ENCODE measurements at regions of chr2 and their contacts with region 1.

Region 1: GRCh38 chr2:54455563-54456361 is at the start of gene SPTBN1:
- DNase-seq: peak; percentile 90
- ATAC-seq: peak; percentile 85
- H3K4me3 ChIP-seq: peak within 1 kb of the TSS; percentile 88
- H3K27ac ChIP-seq: peak within 1 kb of the TSS; percentile 72
- H3K4me1 ChIP-seq: peaks cover 7% of the 10 kb centered on the region; the same call in 1 of the 2 replicates
- H3K27me3 ChIP-seq: no peaks in the 10 kb centered on the region
- CTCF ChIP-seq: no peak
- POLR2A ChIP-seq: peak; percentile 61; the same call in 1 of the 2 replicates
- RAD21 ChIP-seq: 0 out of 2 replicates have a peak, but pooled peaks have one; percentile 5
- total RNA-seq, gene SPTBN1: 230 and 241 TPM in 2 replicates

Region 2: GRCh38 chr2:53970724-53971602 is 484.8 kb before region 1 on chr2 and contains the start of gene PSME4:
- CTCF ChIA-PET with region 1: no interaction called
- POLR2A ChIA-PET with region 1: no interaction called
- dilution Hi-C with region 1: no loop called
- in situ Hi-C with region 1: no loop called
- intact Hi-C with region 1: no loop called
- DNase-seq: peak; percentile 84
- ATAC-seq: peak; percentile 90
- H3K4me3 ChIP-seq: peak within 1 kb of the TSS; percentile 100
- H3K27ac ChIP-seq: peak within 1 kb of the TSS; percentile 99
- H3K4me1 ChIP-seq: peaks cover 6% of the 10 kb centered on the region; the same call in 1 of the 2 replicates
- H3K27me3 ChIP-seq: no peaks in the 10 kb centered on the region
- CTCF ChIP-seq: no peak
- POLR2A ChIP-seq: peak; percentile 97
- RAD21 ChIP-seq: no peak
- total RNA-seq, gene PSME4: 58.9 and 61.3 TPM in 2 replicates

Region 3: GRCh38 chr2:54161660-54162424 is 293.9 kb before region 1 on chr2:
- CTCF ChIA-PET with region 1: no interaction called
- POLR2A ChIA-PET with region 1: no interaction called
- dilution Hi-C with region 1: no loop called
- in situ Hi-C with region 1: no loop called
- intact Hi-C with region 1: loop called (anchors 5 kb)
- DNase-seq: peak; percentile 15
- ATAC-seq: no peak
- H3K4me3 ChIP-seq: no peak overlapping the region
- H3K27ac ChIP-seq: no peak overlapping the region
- H3K4me1 ChIP-seq: no peaks in the 10 kb centered on the region
- H3K27me3 ChIP-seq: no peaks in the 10 kb centered on the region
- CTCF ChIP-seq: no peak; the same call in 1 of the 2 replicates
- POLR2A ChIP-seq: no peak
- RAD21 ChIP-seq: no peak

Region 4: GRCh38 chr2:54330162-54330925 is 125.4 kb before region 1 on chr2:
- CTCF ChIA-PET with region 1: no interaction called
- POLR2A ChIA-PET with region 1: no interaction called
- dilution Hi-C with region 1: no loop called
- in situ Hi-C with region 1: no loop called
- intact Hi-C with region 1: loop called (anchors 5 kb)
- DNase-seq: peak; percentile 92
- ATAC-seq: peak; percentile 99
- H3K4me3 ChIP-seq: peak overlapping the region; percentile 78
- H3K27ac ChIP-seq: peak overlapping the region; percentile 70
- H3K4me1 ChIP-seq: peaks cover 3% of the 10 kb centered on the region
- H3K27me3 ChIP-seq: no peaks in the 10 kb centered on the region
- CTCF ChIP-seq: no peak
- POLR2A ChIP-seq: peak; percentile 68
- RAD21 ChIP-seq: no peak

Region 5: DNA sequence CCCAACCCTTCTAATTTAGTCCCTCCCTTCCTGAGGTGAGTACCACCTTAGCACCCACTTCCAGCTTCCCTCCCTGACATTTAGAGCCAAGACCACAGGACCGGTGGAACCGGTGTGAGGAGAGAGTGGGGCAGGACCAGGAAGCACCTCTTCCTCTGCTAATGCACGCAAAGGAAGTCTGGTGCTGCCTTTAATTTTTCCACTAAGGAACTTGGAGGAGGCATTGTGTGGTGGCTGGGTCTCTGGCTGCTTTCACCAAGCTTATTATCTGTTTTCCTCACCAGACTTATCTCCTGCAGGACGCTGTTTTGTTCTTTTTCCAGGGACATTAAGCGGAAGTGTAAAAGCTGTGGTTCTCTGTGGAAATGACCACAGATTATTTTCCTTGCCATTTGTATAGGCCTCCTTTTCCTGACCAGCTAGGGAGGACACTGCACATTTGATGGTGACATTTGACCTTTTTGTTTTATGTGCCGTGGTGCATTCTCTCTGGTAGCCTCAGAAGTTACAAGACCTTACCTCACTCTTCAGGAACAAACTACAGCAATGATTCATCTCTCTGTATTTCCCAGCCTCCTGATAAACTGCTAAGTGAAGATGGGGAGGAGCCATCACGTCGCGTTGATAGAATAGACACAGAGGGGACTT is 39.5 kb before region 1 on chr2:
- CTCF ChIA-PET with region 1: no interaction called
- POLR2A ChIA-PET with region 1: no interaction called
- dilution Hi-C with region 1: no loop called
- in situ Hi-C with region 1: no loop called
- intact Hi-C with region 1: no loop called
- DNase-seq: peak; percentile 37
- ATAC-seq: no peak; the same call in 1 of the 2 replicates
- H3K4me3 ChIP-seq: no peak overlapping the region
- H3K27ac ChIP-seq: no peak overlapping the region
- H3K4me1 ChIP-seq: no peaks in the 10 kb centered on the region
- H3K27me3 ChIP-seq: no peaks in the 10 kb centered on the region
- CTCF ChIP-seq: no peak
- POLR2A ChIP-seq: no peak
- RAD21 ChIP-seq: no peak

Region 6: GRCh38 chr2:54438271-54438670 is 17.5 kb before region 1 on chr2:
- CTCF ChIA-PET with region 1: no interaction called
- POLR2A ChIA-PET with region 1: interaction called, 17 read pairs
- dilution Hi-C with region 1: no loop called
- in situ Hi-C with region 1: no loop called
- intact Hi-C with region 1: no loop called
- DNase-seq: no peak
- ATAC-seq: no peak
- H3K4me3 ChIP-seq: no peak overlapping the region
- H3K27ac ChIP-seq: no peak overlapping the region
- H3K4me1 ChIP-seq: 0 out of 2 replicates have a peak, but pooled peaks cover 2% of the 10 kb centered on the region
- H3K27me3 ChIP-seq: no peaks in the 10 kb centered on the region; the same call in none of the 2 replicates
- CTCF ChIP-seq: no peak
- POLR2A ChIP-seq: no peak
- RAD21 ChIP-seq: no peak

Region 7: DNA sequence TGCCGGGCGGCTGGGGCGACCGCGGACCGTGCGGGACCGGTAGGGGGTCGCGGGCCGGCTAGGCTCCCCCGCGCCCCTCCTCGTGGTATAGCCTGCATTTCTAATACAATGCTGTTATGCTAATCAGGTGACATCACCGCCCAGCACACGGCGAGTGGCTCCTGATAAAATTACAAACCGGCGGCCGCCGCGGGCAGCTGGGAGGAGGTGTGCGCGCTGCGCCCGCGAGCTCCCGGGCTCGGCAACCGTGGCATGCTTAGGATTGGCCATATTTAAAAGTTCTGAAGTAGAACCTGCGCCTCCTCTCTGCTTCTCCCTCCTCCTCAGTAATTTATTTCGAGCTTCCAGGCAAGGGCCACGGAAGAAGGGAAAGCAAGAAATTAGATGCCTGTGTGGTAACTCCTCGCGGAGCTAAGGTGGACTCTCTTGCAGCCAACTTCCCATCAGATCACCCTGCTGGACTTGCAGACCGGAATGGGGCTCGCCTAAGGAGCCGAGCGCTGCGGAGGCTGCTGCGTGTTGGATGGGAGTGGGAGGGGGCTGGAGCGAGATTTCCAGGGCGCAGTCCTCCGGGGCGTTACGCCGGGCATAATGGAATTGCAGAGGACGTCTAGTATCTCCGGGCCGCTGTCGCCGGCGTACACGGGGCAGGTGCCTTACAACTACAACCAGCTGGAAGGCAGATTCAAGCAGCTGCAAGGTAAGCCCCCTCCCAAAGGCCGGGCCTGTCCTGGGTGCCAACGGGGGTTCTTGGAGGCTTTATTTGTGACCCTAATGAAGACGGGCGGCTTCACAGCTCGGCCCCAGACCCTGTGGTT is 102.6 kb after region 1 on chr2:
- CTCF ChIA-PET with region 1: no interaction called
- POLR2A ChIA-PET with region 1: no interaction called
- dilution Hi-C with region 1: no loop called
- in situ Hi-C with region 1: no loop called
- intact Hi-C with region 1: loop called (anchors 2 kb)
- DNase-seq: peak; percentile 64
- ATAC-seq: peak; percentile 47
- H3K4me3 ChIP-seq: peak overlapping the region; percentile 54
- H3K27ac ChIP-seq: peak overlapping the region; percentile 3; the same call in 1 of the 2 replicates
- H3K4me1 ChIP-seq: peaks cover 21% of the 10 kb centered on the region
- H3K27me3 ChIP-seq: no peaks in the 10 kb centered on the region
- CTCF ChIP-seq: no peak
- POLR2A ChIP-seq: no peak
- RAD21 ChIP-seq: no peak

Region 8: GRCh38 chr2:54704688-54705605 is 249.2 kb after region 1 on chr2:
- CTCF ChIA-PET with region 1: no interaction called
- POLR2A ChIA-PET with region 1: no interaction called
- dilution Hi-C with region 1: no loop called
- in situ Hi-C with region 1: no loop called
- intact Hi-C with region 1: loop called (anchors 2 kb)
- DNase-seq: peak; percentile 77
- ATAC-seq: peak; percentile 87
- H3K4me3 ChIP-seq: no peak overlapping the region
- H3K27ac ChIP-seq: no peak overlapping the region
- H3K4me1 ChIP-seq: no peaks in the 10 kb centered on the region; the same call in 1 of the 2 replicates
- H3K27me3 ChIP-seq: peaks cover 15% of the 10 kb centered on the region
- CTCF ChIP-seq: peak; percentile 81
- POLR2A ChIP-seq: no peak
- RAD21 ChIP-seq: peak; percentile 85

Region 9: DNA sequence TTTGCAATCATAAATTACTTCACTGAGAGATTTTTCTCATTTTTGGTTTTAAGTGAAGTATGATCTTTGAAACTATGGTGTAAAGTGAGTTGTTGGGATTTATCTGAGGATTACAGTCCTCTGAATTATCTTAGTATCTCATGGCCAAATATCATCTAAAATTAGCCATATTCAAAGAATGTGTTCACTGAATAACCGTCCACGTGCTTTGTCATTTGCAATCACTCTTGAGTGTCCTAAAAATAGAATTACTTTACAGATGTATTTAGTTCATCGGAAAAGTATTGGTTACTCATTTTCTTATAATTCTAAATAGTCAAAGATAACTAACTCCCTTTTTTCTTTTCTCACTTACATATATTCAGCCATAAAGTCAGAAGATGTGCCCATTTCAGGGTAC is 453.2 kb after region 1 on chr2:
- CTCF ChIA-PET with region 1: no interaction called
- POLR2A ChIA-PET with region 1: no interaction called
- dilution Hi-C with region 1: no loop called
- in situ Hi-C with region 1: no loop called
- intact Hi-C with region 1: no loop called
- DNase-seq: peak; percentile 69
- ATAC-seq: peak; percentile 31
- H3K4me3 ChIP-seq: no peak overlapping the region
- H3K27ac ChIP-seq: no peak overlapping the region
- H3K4me1 ChIP-seq: peaks cover 9% of the 10 kb centered on the region
- H3K27me3 ChIP-seq: no peaks in the 10 kb centered on the region
- CTCF ChIP-seq: no peak
- POLR2A ChIP-seq: no peak
- RAD21 ChIP-seq: no peak

Measured in IMR-90 (cell line).